ENCODE measurements at regions of chr16 and their contacts with region 1.

Region 1: DNA sequence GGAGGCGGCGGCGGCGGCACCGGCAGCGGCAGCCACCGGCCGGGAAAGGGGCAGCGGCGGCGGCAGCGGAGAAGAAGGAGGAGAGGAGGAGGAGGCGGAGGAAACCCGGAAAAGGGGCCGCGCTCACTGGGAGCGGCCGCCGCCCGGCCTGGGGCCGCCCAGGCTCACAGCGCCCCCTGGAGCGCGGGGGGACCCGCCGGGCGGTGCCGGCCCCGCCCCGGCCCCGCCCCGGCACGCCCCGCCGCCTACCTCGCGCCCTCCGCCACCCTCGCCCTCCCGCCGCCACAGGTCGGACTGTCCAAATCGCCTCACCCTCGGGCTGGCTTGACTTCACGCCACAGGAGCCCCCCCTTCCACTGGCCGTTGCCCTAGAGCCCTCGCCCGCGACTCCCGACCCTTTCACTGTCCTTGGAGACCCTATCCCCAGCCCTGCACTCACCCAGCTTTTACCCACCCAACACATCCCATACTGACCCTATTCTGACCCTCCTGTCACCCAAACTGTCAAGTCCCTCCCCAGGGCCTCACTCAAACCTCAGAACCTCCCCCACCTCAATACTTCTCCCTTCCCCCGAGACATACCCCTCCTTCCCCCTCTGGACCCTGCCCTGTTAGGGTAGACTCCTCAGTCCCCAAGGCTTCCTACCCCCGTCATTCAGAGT is at the start of gene CSNK2A2:
- DNase-seq: peak; percentile 70 to 77
- ATAC-seq: peak; percentile 89 to 97 (median 91)
- H3K4me3 ChIP-seq: peak within 1 kb of the TSS; percentile 75 to 92 (median 86)
- H3K27ac ChIP-seq: peak within 1 kb of the TSS in 9 of 10 donors; percentile 21 to 78 (median 66)
- H3K4me1 ChIP-seq: peaks cover 0 to 29% (median 21%) of the 10 kb centered on the region in 9 donors
- H3K27me3 ChIP-seq: peaks cover 0 to 14% (median 0%) of the 10 kb centered on the region in 7 donors
- CTCF ChIP-seq: peak; percentile 14 to 67 (median 39)
- total RNA-seq, gene CSNK2A2: 27.0 to 48.3 (median 37.8) TPM

Region 2: GRCh38 chr16:58129097-58129936 is 68.8 kb before region 1 on chr16 and contains the start of gene CFAP20:
- intact Hi-C with region 1: loop called in 1 of 10 experiments (anchors 5 kb)
- DNase-seq: peak; percentile 98 to 99
- ATAC-seq: peak; percentile 97 to 98 (median 97)
- H3K4me3 ChIP-seq: peak within 1 kb of the TSS; percentile 71 to 95 (median 92)
- H3K27ac ChIP-seq: peak within 1 kb of the TSS; percentile 52 to 95 (median 90)
- H3K4me1 ChIP-seq: peaks cover 14 to 48% (median 43%) of the 10 kb centered on the region in 9 donors
- H3K27me3 ChIP-seq: no peaks in the 10 kb centered on the region
- CTCF ChIP-seq: peak in 1 of 9 donors; percentile 6
- total RNA-seq, gene CFAP20: 27.8 to 41.8 (median 34.7) TPM

Region 3: GRCh38 chr16:58317608-58318152 is 119.5 kb after region 1 on chr16:
- intact Hi-C with region 1: loop called in 1 of 10 experiments (anchors 10 kb)
- DNase-seq: no peak
- ATAC-seq: peak in 6 of 8 donors; percentile 44 to 82 (median 60)
- H3K4me3 ChIP-seq: no peak overlapping the region
- H3K27ac ChIP-seq: peak overlapping the region in 9 of 10 donors; percentile 14 to 87 (median 77)
- H3K4me1 ChIP-seq: peaks cover 0 to 31% (median 8%) of the 10 kb centered on the region in 9 donors
- H3K27me3 ChIP-seq: no peaks in the 10 kb centered on the region
- CTCF ChIP-seq: no peak